Activated CD4-positive, alpha-beta T cell treated with anti-CD3 and anti-CD28 coated beads, Interleukin-2, amount 10 ng/mL, durations not matched to agents 24 days and 14 days (primary cell): ENCODE measurements at regions of chr7 and their contacts with region 1.

Region 1: DNA sequence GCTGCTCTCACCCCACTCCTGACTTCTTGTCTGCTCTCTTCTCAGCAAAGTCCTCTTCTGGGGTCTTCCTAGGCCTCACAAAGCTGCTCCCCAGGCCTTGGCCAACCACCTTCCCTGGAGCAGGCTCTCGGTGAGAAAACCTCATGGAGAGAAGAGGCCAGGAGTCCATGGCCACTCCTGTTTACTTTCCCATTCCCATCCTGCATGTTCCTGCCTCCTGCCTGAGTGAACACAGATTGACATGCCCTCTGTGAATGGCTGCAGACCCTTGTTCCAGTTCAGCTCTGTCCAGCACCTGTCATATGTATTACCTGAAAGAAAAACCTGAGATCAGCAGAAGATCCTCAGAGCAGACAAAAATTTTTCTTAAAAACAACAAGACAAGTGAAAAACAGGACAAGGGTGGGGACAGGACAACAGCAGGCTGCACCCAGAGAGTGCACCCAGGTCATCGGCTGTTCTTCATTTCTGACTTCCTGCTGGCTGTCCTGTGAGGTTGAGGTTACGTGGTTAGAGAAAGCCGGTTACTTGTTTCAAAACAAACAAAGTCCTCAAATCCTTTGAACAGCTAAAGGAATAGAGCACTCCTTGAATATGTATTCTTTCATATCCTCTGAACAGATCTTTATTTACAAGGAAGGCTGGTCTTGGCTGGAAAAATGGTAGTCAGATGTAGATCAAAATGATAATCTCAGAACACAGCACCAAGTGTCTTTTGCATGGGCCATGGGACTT is 34.0 kb upstream of the DLD start:
- DNase-seq: peak; percentile 84
- H3K4me3 Mint-ChIP-seq: peak overlapping the region; percentile 69
- H3K27ac Mint-ChIP-seq: peak overlapping the region; percentile 85
- H3K4me1 Mint-ChIP-seq: peaks cover 24% of the 10 kb centered on the region
- H3K27me3 Mint-ChIP-seq: peaks cover 2% of the 10 kb centered on the region

Region 2: GRCh38 chr7:107768272-107768671 is 88.7 kb before region 1 on chr7:
- intact Hi-C with region 1: no loop called
- DNase-seq: no peak
- H3K4me3 Mint-ChIP-seq: no peak overlapping the region
- H3K27ac Mint-ChIP-seq: no peak overlapping the region
- H3K4me1 Mint-ChIP-seq: peaks cover 23% of the 10 kb centered on the region
- H3K27me3 Mint-ChIP-seq: no peaks in the 10 kb centered on the region

Region 3: DNA sequence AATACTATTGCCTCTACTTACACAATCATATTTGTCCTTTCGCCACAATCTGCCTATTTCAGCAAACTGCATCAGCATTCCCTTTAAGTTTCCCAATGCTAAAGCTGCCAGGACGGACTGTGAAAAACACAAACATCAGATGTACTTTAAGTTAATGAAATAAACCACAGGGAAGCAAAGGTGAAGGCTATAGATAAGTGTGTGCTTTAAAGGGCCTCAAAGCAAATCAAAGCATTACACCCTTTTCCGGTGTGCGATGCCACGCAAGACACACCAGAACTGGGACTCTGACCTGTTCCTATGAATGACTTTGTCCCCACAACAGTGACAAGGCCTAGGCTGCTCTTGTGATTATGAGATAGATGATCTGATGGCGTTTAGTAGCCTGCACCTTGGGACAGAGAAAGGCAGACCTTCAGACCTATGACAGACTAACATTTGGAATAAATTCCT is 77.3 kb before region 1 on chr7:
- intact Hi-C with region 1: loop called (anchors 5 kb)
- DNase-seq: no peak
- H3K4me3 Mint-ChIP-seq: no peak overlapping the region
- H3K27ac Mint-ChIP-seq: no peak overlapping the region
- H3K4me1 Mint-ChIP-seq: no peaks in the 10 kb centered on the region
- H3K27me3 Mint-ChIP-seq: peaks cover 2% of the 10 kb centered on the region

Region 4: DNA sequence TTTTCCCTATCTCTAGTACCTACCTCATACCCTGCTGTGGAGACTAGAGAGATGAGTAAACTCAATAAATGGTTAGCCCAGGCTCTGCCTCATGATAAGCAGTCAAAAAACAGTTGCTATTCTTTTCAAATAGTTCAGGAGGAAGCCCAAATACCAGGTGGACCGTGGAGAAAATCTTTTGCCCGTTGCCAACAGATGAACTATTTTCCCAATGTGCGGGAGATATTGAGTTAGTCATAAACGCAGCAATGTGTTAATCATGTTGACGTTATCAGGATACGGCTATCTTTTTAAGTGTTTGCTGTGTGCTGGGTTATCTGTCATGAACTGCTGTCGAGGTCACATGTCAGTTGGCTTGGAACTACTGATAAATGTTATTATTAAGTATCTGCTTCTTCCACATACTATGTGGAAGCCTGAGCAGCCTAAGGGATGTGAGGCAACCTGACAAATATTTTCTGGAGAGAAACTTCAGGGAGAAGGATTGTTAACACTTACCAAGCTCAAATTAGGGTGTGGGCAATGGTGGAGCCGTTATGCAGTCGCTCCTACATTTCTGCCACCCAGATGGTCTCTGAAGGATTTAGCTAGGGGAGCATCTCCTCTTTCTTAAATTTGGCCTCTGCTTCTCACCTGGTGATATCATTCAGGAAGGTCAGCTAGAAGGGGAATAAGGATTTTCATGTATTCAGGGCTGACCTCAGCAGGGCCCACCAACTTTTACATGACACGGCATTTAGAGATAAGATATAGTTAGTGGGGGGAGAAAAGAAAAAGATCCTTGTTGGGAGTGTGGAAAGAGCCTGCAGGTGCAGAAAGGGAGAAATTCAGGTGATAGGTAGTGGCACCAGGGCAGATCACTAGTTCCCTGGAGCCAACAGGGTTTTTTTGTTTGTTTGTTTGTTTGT is 20.5 kb before region 1 on chr7:
- intact Hi-C with region 1: no loop called
- DNase-seq: no peak
- H3K4me3 Mint-ChIP-seq: no peak overlapping the region
- H3K27ac Mint-ChIP-seq: no peak overlapping the region
- H3K4me1 Mint-ChIP-seq: no peaks in the 10 kb centered on the region
- H3K27me3 Mint-ChIP-seq: peaks cover 5% of the 10 kb centered on the region